Calu3 (cell line): ENCODE measurements at regions of chr5 and their contacts with region 1.

Region 1: DNA sequence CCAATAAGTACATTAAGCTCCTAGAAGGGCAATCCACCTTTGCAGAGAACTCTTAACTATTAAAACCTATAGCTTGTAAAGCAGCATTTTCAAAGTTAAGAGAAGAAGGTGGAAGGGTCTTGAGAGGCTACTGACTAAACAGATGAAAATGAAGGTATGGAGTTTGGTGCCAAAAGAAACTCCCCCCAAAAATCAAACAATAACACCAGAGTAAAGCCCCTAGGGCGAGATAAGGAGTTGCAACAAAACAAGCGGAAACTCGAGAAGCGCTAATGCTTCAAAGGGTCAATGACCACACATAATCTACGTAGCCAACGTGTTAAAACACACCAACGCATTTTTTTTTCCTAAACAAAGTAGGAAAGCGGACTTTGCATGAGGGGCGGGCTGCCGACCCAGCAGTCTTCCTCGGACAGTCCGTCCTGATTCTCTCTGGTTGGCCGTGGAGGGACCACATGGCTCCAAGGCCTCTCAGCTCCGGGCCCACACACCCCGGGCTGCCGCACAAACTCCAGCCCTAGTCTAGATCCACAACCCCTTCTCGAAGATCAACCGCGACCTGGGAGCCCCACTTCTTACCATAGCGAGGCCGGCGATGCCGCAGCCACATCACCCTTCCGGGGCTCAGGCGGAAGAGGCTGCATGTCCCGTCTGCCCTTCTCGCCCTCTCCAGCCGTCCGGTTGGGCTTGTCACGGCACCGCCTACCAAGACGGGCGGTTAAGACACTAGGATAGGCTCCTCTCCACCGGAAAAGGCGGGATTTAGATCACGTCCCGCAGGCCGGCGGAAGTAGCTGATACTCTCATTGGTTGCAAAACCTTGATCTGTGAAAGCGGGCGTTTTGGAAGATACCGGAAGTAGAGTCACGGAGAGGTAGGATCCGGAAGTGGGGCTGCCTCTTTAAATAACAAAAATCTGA is at the starts of genes TMEM167A and XRCC4:
- DNase-seq: peak; percentile 96
- H3K4me3 Mint-ChIP-seq: peak within 1 kb of the TSS; percentile 96
- H3K27ac Mint-ChIP-seq: peak within 1 kb of the TSS; percentile 98
- H3K4me1 Mint-ChIP-seq: peaks cover 39% of the 10 kb centered on the region
- H3K27me3 Mint-ChIP-seq: no peaks in the 10 kb centered on the region
- CTCF ChIP-seq: no peak
- total RNA-seq, gene TMEM167A: 161 and 165 TPM in 2 replicates
- total RNA-seq, gene XRCC4: 25.5 and 34.2 TPM in 2 replicates

Region 2: DNA sequence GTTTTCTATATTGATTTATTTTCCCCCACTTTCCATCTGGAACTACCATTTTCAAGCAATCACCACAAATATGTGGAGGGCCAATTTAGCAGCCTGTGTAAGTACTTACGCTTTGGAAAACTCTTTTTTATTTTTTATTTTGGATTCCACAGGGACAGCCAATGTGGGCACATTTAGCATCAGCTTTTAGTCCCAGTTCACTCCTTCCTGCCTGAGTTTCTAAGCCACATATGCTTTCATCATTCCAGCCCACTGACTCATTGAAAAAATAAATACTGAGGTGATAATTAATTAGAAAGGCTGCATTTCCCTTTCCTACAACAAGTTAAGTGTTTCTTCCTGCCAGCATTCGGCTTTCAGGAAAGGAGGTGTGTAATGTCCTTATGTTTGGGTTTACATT is 76.6 kb before region 1 on chr5:
- CTCF ChIA-PET with region 1: no interaction called
- intact Hi-C with region 1: loop called (anchors 5 kb)
- DNase-seq: peak; percentile 28
- H3K4me3 Mint-ChIP-seq: peak overlapping the region; percentile 48
- H3K27ac Mint-ChIP-seq: peak overlapping the region; percentile 87
- H3K4me1 Mint-ChIP-seq: peaks cover 23% of the 10 kb centered on the region
- H3K27me3 Mint-ChIP-seq: no peaks in the 10 kb centered on the region
- CTCF ChIP-seq: no peak

Region 3: DNA sequence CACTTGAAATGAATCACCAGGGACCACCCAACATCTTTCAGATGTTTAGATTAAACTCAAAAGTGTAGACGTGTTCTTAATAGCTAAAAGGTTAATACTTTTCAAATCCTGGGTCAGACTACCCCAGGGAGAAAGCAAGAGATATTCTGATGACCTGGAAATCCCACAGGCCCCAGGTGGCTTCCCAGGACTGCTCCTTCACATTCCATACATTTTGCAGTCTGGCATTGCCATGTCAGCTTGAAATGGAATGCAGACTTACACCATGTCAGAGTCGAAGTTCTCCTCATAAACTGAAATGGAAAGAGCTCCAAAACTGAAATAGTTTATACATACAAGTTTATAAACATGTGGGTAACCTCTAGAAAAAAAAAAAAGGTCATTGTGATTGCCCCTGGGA is 61.3 kb before region 1 on chr5:
- CTCF ChIA-PET with region 1: no interaction called
- intact Hi-C with region 1: no loop called
- DNase-seq: no peak
- H3K4me3 Mint-ChIP-seq: no peak overlapping the region
- H3K27ac Mint-ChIP-seq: no peak overlapping the region
- H3K4me1 Mint-ChIP-seq: no peaks in the 10 kb centered on the region
- H3K27me3 Mint-ChIP-seq: no peaks in the 10 kb centered on the region
- CTCF ChIP-seq: no peak

Region 4: DNA sequence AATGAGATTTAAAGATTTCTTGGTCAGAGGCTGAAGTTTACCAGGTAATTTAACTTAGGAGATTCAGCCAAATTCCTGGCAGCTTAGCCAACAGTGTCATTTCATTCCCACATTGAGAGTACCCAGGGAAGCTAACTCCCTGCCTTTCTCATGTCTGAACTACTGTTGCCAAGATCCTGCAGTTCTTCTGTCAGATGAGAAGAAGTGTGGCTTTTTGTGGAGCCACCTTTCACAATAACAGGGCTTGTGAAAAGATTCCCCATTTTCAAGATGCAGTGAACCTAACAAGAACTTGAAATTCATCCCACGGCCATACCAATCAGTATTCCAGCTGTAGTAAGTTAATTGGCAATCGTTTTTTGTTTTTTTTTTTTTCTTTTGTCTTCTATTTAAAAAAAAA is 176.7 kb after region 1 on chr5:
- CTCF ChIA-PET with region 1: no interaction called
- intact Hi-C with region 1: loop called (anchors 5 kb)
- DNase-seq: no peak
- H3K4me3 Mint-ChIP-seq: no peak overlapping the region
- H3K27ac Mint-ChIP-seq: no peak overlapping the region
- H3K4me1 Mint-ChIP-seq: no peaks in the 10 kb centered on the region
- H3K27me3 Mint-ChIP-seq: no peaks in the 10 kb centered on the region
- CTCF ChIP-seq: no peak

Region 5: DNA sequence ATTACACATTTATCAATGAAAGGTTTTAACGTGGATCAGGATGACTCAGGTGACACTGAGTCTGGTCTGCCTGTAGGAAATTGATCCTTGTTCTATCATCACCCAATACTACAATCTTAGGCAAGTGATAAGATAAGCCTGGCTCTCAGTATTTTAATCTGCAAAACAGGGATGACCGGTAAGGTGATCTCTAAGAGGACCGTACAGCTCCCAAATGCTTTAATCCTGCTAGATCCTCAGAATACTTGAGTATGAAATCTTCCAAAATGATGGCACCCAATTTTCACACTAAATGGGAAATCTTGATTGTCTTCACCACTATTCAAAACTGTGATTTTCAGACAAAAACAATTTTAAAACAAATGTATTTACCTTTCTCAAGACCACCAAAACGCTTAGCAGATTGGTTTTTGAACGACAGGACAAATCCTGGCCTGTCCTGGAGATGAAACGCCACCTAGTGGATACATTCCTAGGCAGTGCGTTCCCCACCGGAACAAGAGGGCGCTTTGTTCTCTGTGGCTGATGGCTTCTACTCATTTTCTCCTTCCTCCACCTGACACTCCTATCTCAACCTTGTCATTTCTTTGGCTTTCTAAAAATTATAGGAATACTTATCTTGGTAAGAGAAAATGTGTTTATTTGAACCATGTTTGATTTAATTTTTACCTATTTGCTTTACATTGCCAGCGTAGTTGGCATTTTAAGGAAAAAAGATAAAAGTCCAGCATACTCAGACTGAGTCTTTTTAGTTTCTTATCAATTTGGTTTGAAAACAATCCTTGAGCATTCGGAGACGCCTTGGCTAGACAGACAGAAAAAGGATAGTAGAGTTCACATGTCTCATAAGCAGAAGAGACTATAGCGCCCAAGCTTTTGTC is 353.4 kb after region 1 on chr5:
- CTCF ChIA-PET with region 1: interaction called, 4 read pairs
- intact Hi-C with region 1: loop called (anchors 10 kb)
- DNase-seq: peak; percentile 81
- H3K4me3 Mint-ChIP-seq: no peak overlapping the region
- H3K27ac Mint-ChIP-seq: no peak overlapping the region
- H3K4me1 Mint-ChIP-seq: no peaks in the 10 kb centered on the region
- H3K27me3 Mint-ChIP-seq: no peaks in the 10 kb centered on the region
- CTCF ChIP-seq: peak; percentile 89

Region 6: GRCh38 chr5:83473346-83474163 is 396.6 kb after region 1 on chr5:
- CTCF ChIA-PET with region 1: no interaction called
- intact Hi-C with region 1: loop called (anchors 5 kb)
- DNase-seq: peak; percentile 94
- H3K4me3 Mint-ChIP-seq: peak overlapping the region; percentile 77
- H3K27ac Mint-ChIP-seq: peak overlapping the region; percentile 84
- H3K4me1 Mint-ChIP-seq: peaks cover 49% of the 10 kb centered on the region
- H3K27me3 Mint-ChIP-seq: peaks cover 13% of the 10 kb centered on the region
- CTCF ChIP-seq: peak; percentile 97